AG04449 (cell line): ENCODE measurements at regions of chr5 and their contacts with region 1.

Region 1: DNA sequence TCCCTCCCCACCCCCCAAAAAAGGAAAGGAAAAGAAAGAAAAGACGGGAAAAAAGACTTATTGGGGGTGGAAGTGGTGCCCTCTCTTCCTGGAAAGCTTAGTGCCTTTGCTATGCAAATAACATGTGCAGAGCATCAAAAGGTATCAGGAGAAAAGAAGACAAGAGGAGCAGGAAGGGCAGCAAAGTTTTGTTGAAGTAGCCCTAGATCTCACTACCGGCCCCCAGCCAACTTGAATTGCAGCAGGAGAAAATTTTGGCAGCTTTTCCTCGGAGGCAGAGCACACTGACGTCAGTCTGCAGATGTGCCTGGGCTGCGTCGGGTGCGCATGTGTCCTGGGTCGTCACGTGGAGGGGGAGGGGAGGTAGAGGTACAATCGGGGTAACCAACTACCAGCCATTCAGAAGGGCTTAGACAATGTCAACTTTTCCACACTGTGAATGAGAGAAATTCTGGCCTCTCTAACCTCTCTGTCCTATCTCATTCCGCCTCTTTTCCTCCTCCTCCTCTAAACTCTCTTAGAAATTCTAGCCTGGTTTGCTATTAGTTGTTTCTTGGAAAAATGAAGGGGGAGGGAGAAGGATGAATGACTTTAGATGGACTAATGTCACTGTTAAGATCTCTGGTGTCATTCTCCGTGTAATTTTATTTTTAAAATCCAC is at the start of gene ADAMTS6:
- DNase-seq: peak; percentile 90
- H3K4me3 ChIP-seq: peak within 1 kb of the TSS; percentile 72
- CTCF ChIP-seq: no peak

Region 2: GRCh38 chr5:64634997-64635686 is 846.6 kb before region 1 on chr5:
- CTCF ChIA-PET with region 1: interaction called, 37 read pairs
- POLR2A ChIA-PET with region 1: no interaction called
- DNase-seq: no peak
- H3K4me3 ChIP-seq: no peak overlapping the region
- CTCF ChIP-seq: peak; percentile 54

Region 3: DNA sequence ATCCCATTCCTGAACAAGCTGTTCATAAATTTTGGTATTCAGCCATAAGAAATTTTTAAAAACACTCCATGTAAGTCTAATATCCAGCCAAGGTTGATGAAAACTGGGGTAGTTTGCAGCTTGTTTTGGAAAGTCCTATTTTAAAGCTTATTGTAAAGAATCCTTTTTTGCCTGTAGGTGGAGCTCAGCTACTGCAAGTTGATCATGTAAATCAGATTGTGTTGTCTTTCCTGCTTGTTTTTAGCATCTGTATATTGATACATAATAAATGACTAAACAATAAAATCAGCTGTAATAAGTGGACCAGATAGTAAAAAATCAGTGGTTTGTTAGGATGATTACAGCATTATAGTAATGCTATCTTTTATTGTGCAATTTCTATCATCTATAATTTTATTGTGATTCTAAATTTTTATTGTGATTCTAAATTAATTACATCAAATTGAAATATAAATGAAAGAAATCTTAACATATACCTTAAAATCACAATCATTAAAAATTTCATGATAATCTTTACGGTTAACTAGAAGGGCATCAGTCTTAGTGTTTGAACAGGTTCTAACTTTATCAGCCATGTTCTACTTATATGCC is 670.6 kb before region 1 on chr5:
- CTCF ChIA-PET with region 1: interaction called, 140 read pairs
- POLR2A ChIA-PET with region 1: interaction called, 5 read pairs
- DNase-seq: peak; percentile 28
- H3K4me3 ChIP-seq: no peak overlapping the region
- CTCF ChIP-seq: peak; percentile 47

Region 4: GRCh38 chr5:64958757-64959391 is 522.9 kb before region 1 on chr5:
- CTCF ChIA-PET with region 1: interaction called, 87 read pairs
- POLR2A ChIA-PET with region 1: no interaction called
- DNase-seq: no peak
- H3K4me3 ChIP-seq: no peak overlapping the region
- CTCF ChIP-seq: peak; percentile 34

Region 5: GRCh38 chr5:64971513-64971912 is 510.3 kb before region 1 on chr5:
- CTCF ChIA-PET with region 1: interaction called, 17 read pairs
- POLR2A ChIA-PET with region 1: interaction called, 3 read pairs
- DNase-seq: no peak
- H3K4me3 ChIP-seq: no peak overlapping the region
- CTCF ChIP-seq: no peak